Right cardiac atrium (tissue), 5 donors: ENCODE measurements at regions of chr2 and their contacts with region 1.

Region 1: DNA sequence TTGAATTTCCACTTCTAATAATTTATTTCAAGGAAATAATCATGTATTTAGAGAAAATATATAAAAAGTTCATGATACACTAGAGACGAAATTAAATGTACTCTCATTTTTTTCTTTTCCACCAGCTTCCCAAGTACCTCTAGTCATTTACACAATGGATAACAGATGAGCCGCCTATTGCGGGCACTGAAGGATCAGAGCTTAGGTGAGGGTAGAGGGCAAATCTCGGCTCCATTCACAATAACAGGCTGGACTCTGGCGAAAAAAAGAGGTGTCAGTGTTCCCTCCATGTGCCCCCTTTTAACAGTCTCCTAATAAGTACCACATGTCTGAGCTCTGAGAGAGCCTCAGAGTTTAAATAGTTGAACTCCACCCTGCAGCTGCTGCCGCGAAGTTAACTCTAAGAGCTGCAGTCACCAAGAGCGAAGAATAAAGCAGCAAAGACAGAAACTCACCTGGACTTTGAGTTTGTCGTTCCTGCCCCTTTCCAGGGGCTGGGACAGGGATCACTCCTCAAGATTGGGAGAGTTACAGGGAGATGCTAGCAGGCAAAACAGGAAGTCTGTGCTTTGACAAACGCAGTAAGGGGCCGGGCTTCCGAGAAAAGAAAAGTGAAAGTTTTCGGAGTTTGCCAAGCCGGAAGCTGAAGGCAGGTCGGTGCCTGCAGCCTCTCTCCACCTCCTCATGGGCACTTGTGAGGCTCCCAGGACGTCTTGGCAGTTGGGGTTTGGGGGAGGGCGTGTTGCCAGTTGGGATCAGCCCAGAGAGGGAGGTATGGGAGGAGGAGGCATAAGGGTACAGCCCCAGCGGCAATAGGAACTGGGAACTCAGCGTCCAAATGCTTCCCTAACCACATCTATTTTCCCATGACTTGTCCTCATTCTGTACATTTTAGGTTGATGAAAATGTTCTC is at the start of gene SP110:
- DNase-seq: peak; percentile 82 to 88 (median 86)
- ATAC-seq: peak; percentile 95 to 96
- H3K4me3 ChIP-seq: peak within 1 kb of the TSS; percentile 89
- H3K27ac ChIP-seq: peak within 1 kb of the TSS; percentile 72
- H3K4me1 ChIP-seq: peaks cover 3% of the 10 kb centered on the region
- H3K27me3 ChIP-seq: no peaks in the 10 kb centered on the region
- total RNA-seq, gene SP110: 9.8 to 12.9 (median 11.8) TPM

Region 2: DNA sequence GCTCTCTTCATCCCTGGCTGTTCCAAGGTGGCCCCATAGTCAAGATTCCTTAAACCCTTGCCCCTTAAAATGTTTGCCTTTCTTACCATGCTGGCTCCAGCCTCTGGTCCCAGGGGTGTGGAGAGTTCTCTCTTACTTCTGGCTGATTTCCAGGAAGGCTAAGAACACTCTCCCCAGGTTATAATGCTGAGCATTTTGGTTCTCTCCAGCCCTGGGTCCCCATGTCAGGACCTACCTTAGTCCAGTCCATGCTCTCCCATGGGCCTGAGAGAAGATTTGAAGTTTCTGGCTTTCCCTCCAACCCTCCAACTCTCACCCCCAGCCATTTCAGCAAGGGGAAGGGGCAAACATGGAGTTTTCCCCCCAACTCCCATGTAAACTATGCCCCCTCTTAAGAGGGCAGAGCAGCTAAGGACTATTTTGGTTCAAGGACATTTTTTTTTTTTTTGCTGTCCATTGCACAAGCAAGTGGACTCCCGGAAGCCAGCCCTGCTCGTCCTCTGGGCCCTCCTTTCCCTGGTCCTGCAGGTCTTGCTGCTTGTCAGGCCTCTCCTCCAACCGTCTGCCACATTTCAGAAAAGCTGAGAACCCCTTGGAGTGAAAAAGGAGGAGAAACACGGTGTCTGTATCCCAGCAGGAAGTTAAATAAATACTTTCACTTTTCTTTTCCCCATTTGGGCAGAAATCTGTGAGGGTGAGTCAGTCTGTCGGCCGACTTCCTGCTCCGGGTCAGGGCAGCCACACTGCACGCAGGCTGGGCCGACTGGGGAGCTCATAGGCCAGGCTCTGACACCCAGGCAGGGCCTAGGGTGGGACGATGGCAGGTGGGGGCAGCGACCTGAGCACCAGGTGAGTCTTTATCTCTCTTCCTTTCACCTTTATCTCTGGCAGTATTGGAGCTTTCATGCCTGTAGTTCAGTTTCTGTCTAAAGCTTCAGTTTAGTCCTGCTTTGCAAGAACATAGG is 107.1 kb after region 1 on chr2 and contains the start of gene SP140L:
- intact Hi-C with region 1: loop called in 1 of 4 experiments (anchors 10 kb)
- DNase-seq: peak; percentile 77 to 91 (median 87)
- ATAC-seq: peak; percentile 95 to 97
- H3K4me3 ChIP-seq: peak within 1 kb of the TSS; percentile 42
- H3K27ac ChIP-seq: peak within 1 kb of the TSS; percentile 70
- H3K4me1 ChIP-seq: peaks cover 3% of the 10 kb centered on the region
- H3K27me3 ChIP-seq: no peaks in the 10 kb centered on the region
- total RNA-seq, gene SP140L: 6.6 to 7.4 (median 7.1) TPM

Region 3: DNA sequence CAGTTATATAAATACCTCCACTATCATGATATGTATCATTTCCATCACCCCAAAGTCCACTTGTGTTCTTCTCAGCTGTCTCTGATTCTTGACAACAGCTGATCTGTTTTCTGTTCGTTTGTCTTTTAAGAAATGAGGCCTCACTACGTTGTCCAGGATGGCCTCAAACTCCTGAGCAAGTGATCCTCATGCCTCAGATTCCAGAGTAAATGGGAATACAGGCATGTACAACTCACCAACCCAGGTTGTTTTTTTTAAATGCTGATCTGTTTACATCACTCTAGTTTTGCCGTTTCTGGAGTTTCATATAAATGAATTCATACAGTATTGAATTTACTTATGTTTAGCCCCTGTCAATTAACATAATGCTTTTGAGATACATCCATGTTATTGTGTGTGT is 157.4 kb after region 1 on chr2:
- intact Hi-C with region 1: no loop called
- DNase-seq: no peak
- ATAC-seq: no peak
- H3K4me3 ChIP-seq: no peak overlapping the region
- H3K27ac ChIP-seq: no peak overlapping the region
- H3K4me1 ChIP-seq: no peaks in the 10 kb centered on the region
- H3K27me3 ChIP-seq: no peaks in the 10 kb centered on the region